MCF 10A (cell line): ENCODE measurements at regions of chr1 and their contacts with region 1.

Region 1: DNA sequence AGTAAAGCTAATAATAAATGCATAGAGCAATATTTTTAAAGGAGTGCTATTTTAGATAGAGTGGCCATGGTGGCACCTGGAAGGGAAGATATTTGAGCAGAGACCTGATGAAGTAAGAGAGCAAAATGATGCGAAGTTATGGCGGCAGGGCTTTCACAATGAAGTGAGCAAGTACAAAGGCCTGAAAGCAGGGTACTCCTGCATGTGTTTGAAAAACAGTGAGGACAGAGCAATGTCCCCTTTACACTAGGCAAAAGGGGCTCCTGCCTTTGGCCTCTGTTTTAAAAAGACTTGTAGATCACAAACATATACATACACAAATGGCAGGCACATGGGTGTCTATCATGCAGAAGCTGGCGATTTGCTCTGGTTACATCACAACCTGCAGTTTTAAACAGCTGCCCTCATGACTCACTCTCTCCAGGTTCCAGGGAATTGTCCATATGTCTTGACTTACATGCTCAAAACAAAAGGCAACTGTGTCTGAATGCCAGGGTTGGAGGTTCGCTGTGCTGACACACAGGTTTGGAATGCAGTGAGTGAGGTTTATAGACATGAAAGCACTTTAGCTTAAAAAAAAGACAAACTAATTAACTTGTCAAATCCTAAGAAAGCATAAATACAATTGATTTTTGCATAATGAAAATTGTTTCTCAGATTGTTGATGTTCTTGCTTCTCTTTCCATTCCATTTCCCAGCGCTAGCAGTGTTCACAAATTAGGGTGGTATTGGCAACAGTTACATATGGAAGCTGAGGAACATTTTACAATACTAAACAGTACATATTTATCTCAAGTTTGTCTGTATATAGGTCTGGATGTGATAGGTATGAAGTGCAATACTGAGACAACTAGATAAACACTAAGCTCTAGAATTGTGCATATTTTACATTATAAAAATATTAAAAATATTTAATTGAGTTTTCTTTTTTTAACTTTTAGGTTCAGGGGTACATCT is 313.9 kb downstream of the BARHL2 start:
- DNase-seq: peak; percentile 98
- H3K4me3 Mint-ChIP-seq: no peak overlapping the region
- H3K27ac Mint-ChIP-seq: peak overlapping the region; percentile 40
- H3K4me1 Mint-ChIP-seq: peaks cover 35% of the 10 kb centered on the region
- H3K27me3 Mint-ChIP-seq: no peaks in the 10 kb centered on the region
- CTCF ChIP-seq: no peak

Region 2: DNA sequence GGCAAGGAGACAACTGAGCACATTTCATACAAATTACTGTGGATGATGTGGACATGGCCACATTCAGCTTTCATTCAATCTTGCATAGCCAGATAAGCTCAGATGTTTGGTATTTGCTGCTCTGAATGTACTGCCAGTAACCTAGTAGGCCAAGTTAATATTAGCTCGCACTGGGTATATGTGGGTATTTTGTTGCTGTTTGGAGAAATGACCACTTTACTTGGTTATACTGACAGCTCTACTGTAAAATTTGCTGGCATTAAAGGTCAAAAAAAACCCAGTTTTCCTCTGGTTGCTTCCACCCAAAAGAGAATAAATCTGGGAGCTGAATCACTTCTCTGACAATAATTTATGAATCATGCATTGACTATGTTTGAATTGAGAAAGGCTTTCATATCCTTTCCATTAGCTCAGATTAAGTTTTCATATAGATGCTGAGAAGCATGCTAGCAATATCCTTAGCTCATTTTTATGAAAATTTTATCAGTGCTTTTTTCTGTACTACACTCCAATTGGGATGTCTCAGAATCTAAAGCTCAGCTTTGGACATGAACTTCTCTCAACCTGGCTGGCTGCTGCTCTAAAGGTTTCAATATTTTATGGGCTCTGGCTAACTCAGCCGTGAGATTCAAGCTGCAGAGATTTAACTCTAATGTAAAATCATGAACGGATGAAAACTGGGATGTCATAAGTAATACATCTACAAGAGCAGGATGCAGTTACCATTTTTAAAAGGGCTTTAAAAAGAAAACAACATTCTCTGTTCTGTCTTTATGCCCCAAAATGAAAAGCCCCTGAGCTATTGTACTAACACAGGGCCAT is 16.1 kb before region 1 on chr1:
- CTCF ChIA-PET with region 1: interaction called, 6 read pairs
- POLR2A ChIA-PET with region 1: interaction called, 19 read pairs
- intact Hi-C with region 1: loop called (anchors 1 kb)
- DNase-seq: no peak
- H3K4me3 Mint-ChIP-seq: no peak overlapping the region
- H3K27ac Mint-ChIP-seq: no peak overlapping the region
- H3K4me1 Mint-ChIP-seq: peaks cover 15% of the 10 kb centered on the region
- H3K27me3 Mint-ChIP-seq: no peaks in the 10 kb centered on the region
- CTCF ChIP-seq: no peak

Region 3: DNA sequence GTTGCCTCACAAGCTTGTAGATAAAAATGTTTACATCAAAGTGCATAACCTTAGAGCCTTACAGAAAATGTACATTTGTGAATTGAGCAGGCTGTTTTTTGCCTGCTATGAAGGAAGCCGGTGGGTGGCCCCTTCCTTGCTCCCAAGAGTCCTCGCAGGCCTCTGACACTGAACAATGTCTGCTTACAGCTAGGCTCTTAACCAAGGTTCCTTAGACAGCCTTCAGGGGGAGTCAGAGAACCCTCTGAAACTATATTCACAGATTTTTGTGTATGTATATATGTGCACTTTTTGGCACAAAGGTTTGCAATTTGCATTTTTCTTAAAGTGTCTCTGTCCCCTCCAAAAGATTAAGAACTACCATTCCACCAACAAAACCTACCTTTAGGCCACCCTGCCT is 31.3 kb after region 1 on chr1:
- CTCF ChIA-PET with region 1: no interaction called
- POLR2A ChIA-PET with region 1: no interaction called
- intact Hi-C with region 1: no loop called
- DNase-seq: peak; percentile 14
- H3K4me3 Mint-ChIP-seq: no peak overlapping the region
- H3K27ac Mint-ChIP-seq: no peak overlapping the region
- H3K4me1 Mint-ChIP-seq: no peaks in the 10 kb centered on the region
- H3K27me3 Mint-ChIP-seq: no peaks in the 10 kb centered on the region
- CTCF ChIP-seq: no peak